ENCODE measurements at regions of chr1 and their contacts with region 1.

Region 1: DNA sequence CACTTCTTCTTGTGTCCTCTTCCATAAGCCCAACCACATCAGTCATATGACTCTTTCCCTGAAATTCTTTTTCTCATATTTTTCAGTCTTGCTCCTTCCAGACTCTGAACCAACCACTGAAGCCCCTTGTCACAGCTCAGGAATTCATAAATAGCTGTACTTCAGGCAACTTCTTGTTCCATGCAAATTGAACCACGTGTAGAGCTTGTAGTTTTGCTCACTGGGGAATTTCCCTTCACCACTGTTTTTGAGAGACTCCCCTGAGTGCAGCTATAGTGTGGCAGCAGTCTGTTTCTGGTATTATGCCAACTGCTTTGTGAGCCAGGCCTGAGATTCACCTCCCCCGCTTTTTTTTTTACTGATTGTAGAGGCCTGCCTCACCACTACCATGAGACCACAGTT is 150.3 kb upstream of the SPAG17 start:
- DNase-seq: peak; percentile 93
- H3K4me3 ChIP-seq: no peak overlapping the region
- H3K27ac ChIP-seq: peak overlapping the region; percentile 55
- H3K4me1 ChIP-seq: peaks cover 27% of the 10 kb centered on the region
- H3K27me3 ChIP-seq: no peaks in the 10 kb centered on the region
- CTCF ChIP-seq: no peak

Region 2: DNA sequence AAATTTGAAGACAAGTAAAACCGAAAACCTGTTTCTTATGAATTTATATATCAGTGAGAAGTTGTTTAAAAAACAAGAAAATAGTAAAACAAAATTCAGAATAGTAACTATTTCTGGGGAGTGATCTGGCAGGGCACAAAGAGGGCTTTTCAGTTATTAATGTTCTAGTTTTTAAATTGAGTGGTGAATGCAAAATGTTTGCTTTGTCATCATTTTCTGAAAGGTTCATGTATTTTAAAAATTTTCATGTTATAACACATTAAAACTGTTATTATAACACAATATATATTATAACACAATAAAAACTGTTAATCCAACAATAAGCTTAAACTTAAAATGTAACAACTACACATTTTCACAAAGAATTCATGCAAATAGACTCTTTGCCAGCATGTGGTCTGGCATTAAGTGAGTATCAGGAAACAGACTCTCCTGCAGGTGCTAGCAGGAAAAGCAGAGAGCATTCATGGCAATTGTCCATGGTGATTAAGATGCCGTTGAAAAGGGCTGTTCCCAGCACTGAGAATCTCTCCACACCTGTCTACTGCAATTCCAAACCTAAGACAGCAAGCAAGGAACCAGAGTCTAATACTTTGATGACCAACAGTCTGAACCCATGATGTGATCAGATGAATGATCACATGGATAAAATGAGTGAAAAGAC is 447.9 kb after region 1 on chr1:
- CTCF ChIA-PET with region 1: no interaction called
- POLR2A ChIA-PET with region 1: no interaction called
- intact Hi-C with region 1: loop called (anchors 5 kb)
- DNase-seq: peak; percentile 36
- H3K4me3 ChIP-seq: no peak overlapping the region
- H3K27ac ChIP-seq: no peak overlapping the region
- H3K4me1 ChIP-seq: peaks cover 53% of the 10 kb centered on the region
- H3K27me3 ChIP-seq: no peaks in the 10 kb centered on the region
- CTCF ChIP-seq: no peak

Region 3: GRCh38 chr1:118846443-118846842 is 511.1 kb after region 1 on chr1:
- CTCF ChIA-PET with region 1: no interaction called
- POLR2A ChIA-PET with region 1: no interaction called
- intact Hi-C with region 1: no loop called
- DNase-seq: no peak
- H3K4me3 ChIP-seq: no peak overlapping the region
- H3K27ac ChIP-seq: no peak overlapping the region
- H3K4me1 ChIP-seq: no peaks in the 10 kb centered on the region
- H3K27me3 ChIP-seq: no peaks in the 10 kb centered on the region
- CTCF ChIP-seq: no peak

Region 4: GRCh38 chr1:119068427-119068826 is 733.1 kb after region 1 on chr1:
- CTCF ChIA-PET with region 1: no interaction called
- POLR2A ChIA-PET with region 1: no interaction called
- intact Hi-C with region 1: no loop called
- DNase-seq: no peak
- H3K4me3 ChIP-seq: no peak overlapping the region
- H3K27ac ChIP-seq: no peak overlapping the region
- H3K4me1 ChIP-seq: no peaks in the 10 kb centered on the region
- H3K27me3 ChIP-seq: no peaks in the 10 kb centered on the region
- CTCF ChIP-seq: no peak

Measured in A673 (cell line).